ENCODE measurements at regions of chr7 and their contacts with region 1.

Region 1: DNA sequence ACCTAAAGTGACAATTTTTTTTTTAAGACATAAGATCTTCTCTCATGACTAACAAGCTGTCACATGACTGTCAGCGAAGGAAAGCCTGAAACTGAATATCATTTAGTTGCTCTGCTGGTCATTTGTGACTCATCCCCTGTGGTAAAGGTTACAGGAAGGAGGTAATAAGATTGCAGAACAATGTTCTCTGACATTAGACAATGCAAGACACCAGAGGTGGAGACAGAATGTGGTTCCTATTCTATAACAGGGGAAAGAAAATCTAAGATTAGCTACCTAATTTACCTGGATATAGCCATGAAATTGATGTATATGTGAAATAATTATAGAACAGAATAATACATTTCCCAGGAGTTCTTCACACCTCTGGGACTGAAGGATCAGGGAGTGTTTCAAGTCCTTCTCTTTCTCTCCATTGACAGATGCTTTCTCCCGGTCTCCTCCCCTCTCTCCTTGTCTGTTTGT is 47.7 kb downstream of the LRGUK start:
- DNase-seq: peak; percentile 40
- H3K4me3 ChIP-seq: no peak overlapping the region
- CTCF ChIP-seq: no peak

Region 2: DNA sequence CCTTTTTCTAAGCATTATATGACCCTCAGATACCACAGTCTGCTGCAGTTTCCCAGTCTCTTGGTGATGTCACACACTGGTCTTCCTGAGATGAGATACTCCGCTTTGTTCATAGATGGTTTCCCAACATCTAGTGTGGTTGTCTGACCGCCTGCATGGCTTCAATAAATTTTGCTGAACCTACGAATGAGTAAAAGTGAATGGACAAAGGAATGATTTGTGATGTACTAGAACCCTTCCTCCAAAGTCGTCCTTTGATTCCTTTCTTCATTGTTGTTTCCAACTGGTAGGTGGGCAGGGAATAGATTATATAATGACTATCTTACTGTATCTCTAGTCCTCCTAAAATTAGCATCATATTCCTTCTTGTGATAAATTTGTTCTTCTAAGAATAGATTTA is 59.4 kb after region 1 on chr7:
- in situ Hi-C with region 1: loop called (anchors 5 kb)
- DNase-seq: no peak
- H3K4me3 ChIP-seq: no peak overlapping the region
- CTCF ChIP-seq: no peak